Activated naive CD4-positive, alpha-beta T cell treated with anti-CD3 and anti-CD28 coated beads for 36 hours (primary cell): ENCODE measurements at regions of chr19 and their contacts with region 1.

Region 1: GRCh38 chr19:45886427-45887199 is 672 bp upstream of the IRF2BP1 start:
- DNase-seq: peak; percentile 98
- H3K4me3 Mint-ChIP-seq: peak overlapping the region; percentile 94
- H3K27ac Mint-ChIP-seq: peak overlapping the region; percentile 95
- H3K4me1 Mint-ChIP-seq: peaks cover 25% of the 10 kb centered on the region
- H3K27me3 Mint-ChIP-seq: no peaks in the 10 kb centered on the region

Region 2: DNA sequence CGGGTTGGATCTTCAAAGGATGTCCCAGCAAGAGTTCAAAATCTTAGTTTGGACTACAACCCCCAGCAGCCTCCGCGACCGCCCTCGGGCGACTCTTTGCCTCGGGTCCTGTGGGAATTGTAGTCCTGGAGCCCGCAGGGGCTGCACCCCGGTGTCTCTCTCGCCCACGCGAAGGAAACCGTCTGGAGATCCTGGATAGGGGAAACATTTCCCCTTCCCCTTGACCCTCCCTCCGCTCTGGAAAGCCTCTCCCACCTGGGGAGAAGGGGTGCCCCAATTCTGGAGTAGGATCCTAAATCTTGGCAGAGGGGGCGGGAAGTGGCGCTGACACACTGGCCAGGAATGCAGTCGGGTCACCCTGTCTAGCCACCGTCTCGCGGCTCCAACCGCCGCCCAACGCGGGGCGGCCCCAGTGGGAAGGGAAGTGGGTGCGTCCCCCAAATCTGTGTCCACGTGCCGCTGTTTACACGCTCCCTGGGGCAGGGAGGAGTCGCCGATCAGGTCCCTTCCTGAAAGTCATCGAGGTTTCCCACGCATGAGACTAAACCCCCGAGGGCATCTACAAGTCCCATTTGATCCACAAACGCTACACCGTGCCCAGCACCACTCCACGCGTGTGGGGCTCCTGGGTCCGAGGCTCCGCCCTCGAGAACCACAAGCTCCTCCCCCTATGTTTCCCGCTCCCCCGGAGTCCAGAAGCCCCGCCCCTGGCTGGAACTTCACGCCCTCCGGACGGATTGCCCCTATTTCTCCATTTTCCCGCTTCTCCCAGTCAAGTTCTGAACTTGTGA is 481.0 kb before region 1 on chr19:
- CTCF ChIA-PET with region 1: no interaction called
- intact Hi-C with region 1: no loop called
- DNase-seq: peak; percentile 90
- H3K4me3 Mint-ChIP-seq: peak overlapping the region; percentile 93
- H3K27ac Mint-ChIP-seq: peak overlapping the region; percentile 93
- H3K4me1 Mint-ChIP-seq: peaks cover 44% of the 10 kb centered on the region
- H3K27me3 Mint-ChIP-seq: peaks cover 30% of the 10 kb centered on the region

Region 3: GRCh38 chr19:45717166-45717982 is 169.2 kb before region 1 on chr19:
- CTCF ChIA-PET with region 1: no interaction called
- intact Hi-C with region 1: loop called (anchors 1 kb)
- DNase-seq: peak; percentile 99
- H3K4me3 Mint-ChIP-seq: peak overlapping the region; percentile 96
- H3K27ac Mint-ChIP-seq: peak overlapping the region; percentile 97
- H3K4me1 Mint-ChIP-seq: peaks cover 41% of the 10 kb centered on the region
- H3K27me3 Mint-ChIP-seq: no peaks in the 10 kb centered on the region

Region 4: GRCh38 chr19:45779231-45780145 is 107.1 kb before region 1 on chr19:
- CTCF ChIA-PET with region 1: no interaction called
- intact Hi-C with region 1: no loop called
- DNase-seq: peak; percentile 93
- H3K4me3 Mint-ChIP-seq: peak overlapping the region; percentile 65
- H3K27ac Mint-ChIP-seq: no peak overlapping the region
- H3K4me1 Mint-ChIP-seq: peaks cover 13% of the 10 kb centered on the region
- H3K27me3 Mint-ChIP-seq: peaks cover 29% of the 10 kb centered on the region

Region 5: GRCh38 chr19:45817010-45817724 is 69.4 kb before region 1 on chr19:
- CTCF ChIA-PET with region 1: interaction called, 17 read pairs
- intact Hi-C with region 1: loop called (anchors 1 kb)
- DNase-seq: peak; percentile 99
- H3K4me3 Mint-ChIP-seq: no peak overlapping the region
- H3K27ac Mint-ChIP-seq: no peak overlapping the region
- H3K4me1 Mint-ChIP-seq: peaks cover 10% of the 10 kb centered on the region
- H3K27me3 Mint-ChIP-seq: peaks cover 19% of the 10 kb centered on the region

Region 6: GRCh38 chr19:45913874-45914830 is 27.5 kb after region 1 on chr19 and contains the start of gene NANOS2:
- CTCF ChIA-PET with region 1: no interaction called
- intact Hi-C with region 1: no loop called
- DNase-seq: no peak
- H3K4me3 Mint-ChIP-seq: no peak within 1 kb of the TSS
- H3K27ac Mint-ChIP-seq: no peak within 1 kb of the TSS
- H3K4me1 Mint-ChIP-seq: no peaks in the 10 kb centered on the region
- H3K27me3 Mint-ChIP-seq: peaks cover 15% of the 10 kb centered on the region
- total RNA-seq, gene NANOS2: not detected

Region 7: GRCh38 chr19:45927565-45928261 is 41.1 kb after region 1 on chr19:
- CTCF ChIA-PET with region 1: no interaction called
- intact Hi-C with region 1: loop called (anchors 1 kb)
- DNase-seq: peak; percentile 96
- H3K4me3 Mint-ChIP-seq: peak overlapping the region; percentile 74
- H3K27ac Mint-ChIP-seq: no peak overlapping the region
- H3K4me1 Mint-ChIP-seq: peaks cover 7% of the 10 kb centered on the region
- H3K27me3 Mint-ChIP-seq: peaks cover 5% of the 10 kb centered on the region

Region 8: DNA sequence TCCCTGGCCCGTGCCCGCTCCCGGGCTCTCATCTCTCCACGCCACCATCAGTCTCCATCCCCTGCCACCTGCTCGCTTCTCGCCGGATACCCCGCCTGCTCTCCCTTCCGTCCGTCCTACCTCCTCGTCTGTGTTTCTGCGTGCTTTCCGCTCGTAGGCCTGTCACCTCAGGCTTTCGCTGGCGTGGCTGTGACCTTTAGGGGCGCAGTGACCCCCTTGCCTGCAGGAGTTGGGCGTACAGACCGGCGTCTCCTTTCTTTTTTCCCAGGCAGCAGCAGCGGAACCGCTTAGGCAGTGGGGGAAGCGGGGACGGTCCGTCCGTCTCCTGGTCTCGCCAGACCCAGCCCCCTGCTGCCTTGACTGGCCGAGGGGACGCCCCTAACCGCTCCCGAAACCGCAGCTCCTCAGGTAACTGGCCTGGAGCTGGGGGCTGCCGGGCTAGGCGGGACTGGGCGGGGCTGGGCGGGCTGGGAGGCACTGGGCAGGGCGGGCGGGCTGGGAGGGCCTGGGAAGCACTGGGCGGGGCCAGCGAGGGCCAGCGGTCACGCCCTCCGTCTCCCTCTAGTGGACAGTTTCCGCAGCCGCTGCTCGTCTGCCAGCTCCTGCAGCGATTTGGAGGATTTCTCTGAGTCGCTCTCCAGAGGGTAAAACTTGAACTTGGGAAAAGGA is 129.9 kb after region 1 on chr19:
- CTCF ChIA-PET with region 1: no interaction called
- intact Hi-C with region 1: loop called (anchors 1 kb)
- DNase-seq: peak; percentile 86
- H3K4me3 Mint-ChIP-seq: peak overlapping the region; percentile 74
- H3K27ac Mint-ChIP-seq: peak overlapping the region; percentile 62
- H3K4me1 Mint-ChIP-seq: peaks cover 17% of the 10 kb centered on the region
- H3K27me3 Mint-ChIP-seq: peaks cover 15% of the 10 kb centered on the region